CD4-positive, alpha-beta memory T cell (primary cell): ENCODE measurements at regions of chr17 and their contacts with region 1.

Region 1: GRCh38 chr17:58352014-58352842 is at the start of gene SUPT4H1:
- DNase-seq: peak; percentile 91 to 94 (median 94)
- H3K4me3 ChIP-seq: peak within 1 kb of the TSS; percentile 92 to 98
- H3K4me3 Mint-ChIP-seq: peak within 1 kb of the TSS; percentile 99 to 100 (median 99)
- H3K27ac ChIP-seq: peak within 1 kb of the TSS; percentile 85
- H3K27ac Mint-ChIP-seq: peak within 1 kb of the TSS; percentile 98 to 100 (median 99)
- H3K4me1 ChIP-seq: peaks cover 57% of the 10 kb centered on the region
- H3K4me1 Mint-ChIP-seq: peaks cover 37 to 65% (median 52%) of the 10 kb centered on the region in 4 donors
- H3K27me3 ChIP-seq: no peaks in the 10 kb centered on the region
- H3K27me3 Mint-ChIP-seq: no peaks in the 10 kb centered on the region
- total RNA-seq, gene SUPT4H1: 61.4 to 75.2 TPM

Region 2: DNA sequence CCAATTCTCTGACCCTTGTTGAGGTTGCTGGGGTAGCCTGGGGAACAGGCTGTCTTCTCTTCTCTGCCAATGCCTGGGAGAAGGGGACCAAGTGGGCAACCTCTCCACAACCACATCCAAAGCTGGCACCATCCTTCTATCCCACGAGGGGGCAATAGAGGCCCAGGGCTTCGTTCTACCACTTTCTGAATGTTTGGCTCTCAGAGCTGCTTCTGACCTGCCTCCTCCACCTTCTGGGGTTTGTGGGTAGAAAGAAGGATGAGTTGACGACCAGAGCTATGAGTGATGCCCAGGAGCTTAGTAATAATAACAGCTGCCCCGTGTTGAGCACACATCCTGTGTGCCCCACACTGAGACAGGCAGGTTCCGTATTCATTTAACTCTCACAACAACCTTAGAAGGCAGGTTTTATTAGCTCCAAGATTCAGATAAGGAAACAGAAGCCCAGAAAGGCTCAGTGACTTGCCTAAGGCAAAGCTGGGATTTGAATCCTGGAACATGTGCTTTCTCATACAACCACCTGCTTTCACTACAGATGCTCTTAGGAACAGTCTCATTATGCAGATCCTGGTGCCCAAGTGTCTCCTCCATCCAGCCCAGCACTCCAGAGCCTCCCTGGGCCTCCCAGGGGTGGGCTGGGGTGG is 34.7 kb before region 1 on chr17:
- CTCF ChIA-PET with region 1: interaction called, 510 read pairs
- POLR2A ChIA-PET with region 1: interaction called, 3,924 read pairs
- intact Hi-C with region 1: loop called (anchors 2 kb)
- DNase-seq: peak; percentile 80 to 84 (median 82)
- H3K4me3 ChIP-seq: peak overlapping the region in 1 of 2 donors; percentile 4
- H3K4me3 Mint-ChIP-seq: peak overlapping the region in 3 of 8 donors; percentile 18 to 48 (median 35)
- H3K27ac ChIP-seq: peak overlapping the region; percentile 31
- H3K27ac Mint-ChIP-seq: peak overlapping the region; percentile 80 to 95 (median 91)
- H3K4me1 ChIP-seq: peaks cover 18% of the 10 kb centered on the region
- H3K4me1 Mint-ChIP-seq: peaks cover 8 to 31% (median 14%) of the 10 kb centered on the region in 4 donors
- H3K27me3 ChIP-seq: no peaks in the 10 kb centered on the region
- H3K27me3 Mint-ChIP-seq: no peaks in the 10 kb centered on the region

Region 3: DNA sequence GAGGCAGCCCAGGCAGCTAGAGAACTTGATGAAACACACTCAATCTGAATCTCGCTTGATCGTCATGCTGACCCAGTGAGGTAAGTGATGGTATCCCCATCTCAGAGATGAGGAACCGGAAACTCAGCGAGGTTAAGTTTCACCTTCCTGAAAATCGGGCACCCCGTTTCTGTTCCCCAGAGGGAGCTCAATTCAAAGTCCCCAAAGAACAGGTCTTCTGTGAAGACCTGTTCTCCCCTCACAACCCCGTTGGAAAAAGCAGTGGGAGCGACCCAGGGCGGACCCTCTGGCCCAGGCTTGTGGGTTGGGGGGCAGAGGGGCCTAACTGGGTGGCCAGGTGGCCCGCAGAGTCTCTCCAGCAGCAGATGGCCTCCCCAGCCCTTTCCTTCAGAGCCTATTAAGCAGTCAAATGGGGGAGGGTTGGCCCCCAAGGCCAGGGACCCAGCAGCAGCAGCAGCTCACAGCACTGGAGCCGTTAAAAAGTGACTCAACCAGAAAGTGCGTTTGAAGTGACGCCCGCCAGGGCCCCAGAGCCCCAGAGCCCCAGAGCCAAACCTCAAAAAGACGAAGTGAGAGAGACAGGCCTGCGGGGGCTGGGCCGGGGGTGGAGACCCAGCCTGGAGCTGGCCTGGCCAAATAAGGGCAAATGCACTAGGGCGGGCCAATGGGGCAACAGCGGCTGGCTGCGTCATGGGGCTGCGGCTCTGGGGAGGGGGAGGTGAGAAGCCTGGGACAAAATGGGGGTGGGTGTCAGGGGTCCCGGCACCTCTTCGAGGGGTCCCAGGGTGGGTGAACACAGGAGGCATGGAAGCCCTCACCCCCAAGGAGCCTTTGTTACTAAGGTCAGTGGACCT is 14.4 kb before region 1 on chr17:
- CTCF ChIA-PET with region 1: interaction called, 164 read pairs
- POLR2A ChIA-PET with region 1: interaction called, 3,924 read pairs
- intact Hi-C with region 1: no loop called
- DNase-seq: peak; percentile 89 to 96 (median 91)
- H3K4me3 ChIP-seq: peak overlapping the region; percentile 99
- H3K4me3 Mint-ChIP-seq: peak overlapping the region; percentile 88 to 99 (median 98)
- H3K27ac ChIP-seq: peak overlapping the region; percentile 97
- H3K27ac Mint-ChIP-seq: peak overlapping the region; percentile 94 to 99 (median 97)
- H3K4me1 ChIP-seq: peaks cover 89% of the 10 kb centered on the region
- H3K4me1 Mint-ChIP-seq: peaks cover 41 to 98% (median 64%) of the 10 kb centered on the region in 4 donors
- H3K27me3 ChIP-seq: no peaks in the 10 kb centered on the region
- H3K27me3 Mint-ChIP-seq: no peaks in the 10 kb centered on the region

Region 4: DNA sequence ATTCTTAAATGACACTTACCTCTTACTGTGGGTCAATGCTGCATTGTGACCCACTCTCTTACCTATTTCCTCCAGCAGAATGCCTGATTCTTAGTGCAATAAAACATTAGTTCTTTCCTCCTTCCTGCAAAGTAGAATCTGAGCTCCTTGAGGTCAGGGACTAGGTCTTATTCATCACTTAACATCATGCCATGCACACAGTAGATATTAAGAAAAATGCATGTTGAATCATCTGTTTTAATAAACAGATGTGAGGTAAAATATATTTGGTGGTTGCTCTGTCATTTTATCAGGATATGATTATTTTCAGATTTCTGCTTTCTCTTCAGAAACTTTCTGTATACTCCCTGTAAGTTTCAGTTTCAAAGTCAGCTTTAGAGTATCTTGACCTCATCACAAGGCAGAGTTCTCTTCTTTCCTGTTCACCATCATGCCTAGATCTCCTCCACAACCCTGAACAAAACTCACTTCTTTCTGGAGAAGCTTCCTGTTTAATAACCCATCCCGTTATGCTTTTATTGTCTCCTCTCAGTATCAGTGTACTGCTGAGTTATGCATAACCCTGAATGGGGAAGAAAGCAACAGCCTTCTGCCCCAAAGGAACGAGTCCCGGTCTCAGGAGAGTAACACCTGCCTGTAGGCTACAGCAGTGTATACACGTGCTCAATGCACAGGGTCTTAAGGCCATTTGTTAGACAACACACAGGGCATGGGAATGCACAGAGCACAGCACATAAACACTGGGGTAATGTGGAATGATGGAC is 30.1 kb after region 1 on chr17:
- CTCF ChIA-PET with region 1: no interaction called
- POLR2A ChIA-PET with region 1: interaction called, 15 read pairs
- intact Hi-C with region 1: no loop called
- DNase-seq: peak in 2 of 5 donors; percentile 10 to 12
- H3K4me3 ChIP-seq: no peak overlapping the region
- H3K4me3 Mint-ChIP-seq: peak overlapping the region; percentile 3 to 66 (median 58)
- H3K27ac ChIP-seq: no peak overlapping the region
- H3K27ac Mint-ChIP-seq: peak overlapping the region; percentile 3 to 83 (median 63)
- H3K4me1 ChIP-seq: peaks cover 44% of the 10 kb centered on the region
- H3K4me1 Mint-ChIP-seq: peaks cover 36 to 51% (median 38%) of the 10 kb centered on the region in 4 donors
- H3K27me3 ChIP-seq: no peaks in the 10 kb centered on the region
- H3K27me3 Mint-ChIP-seq: no peaks in the 10 kb centered on the region

Region 5: GRCh38 chr17:58476812-58477211 is 124.6 kb after region 1 on chr17:
- CTCF ChIA-PET with region 1: no interaction called
- POLR2A ChIA-PET with region 1: no interaction called
- intact Hi-C with region 1: no loop called
- DNase-seq: no peak
- H3K4me3 ChIP-seq: no peak overlapping the region
- H3K4me3 Mint-ChIP-seq: no peak overlapping the region
- H3K27ac ChIP-seq: no peak overlapping the region
- H3K27ac Mint-ChIP-seq: no peak overlapping the region
- H3K4me1 ChIP-seq: no peaks in the 10 kb centered on the region
- H3K4me1 Mint-ChIP-seq: peaks cover 0 to 1% (median 0%) of the 10 kb centered on the region in 4 donors
- H3K27me3 ChIP-seq: no peaks in the 10 kb centered on the region
- H3K27me3 Mint-ChIP-seq: no peaks in the 10 kb centered on the region